WTC11 (cell line): ENCODE measurements at regions of chr17 and their contacts with region 1.

Region 1: GRCh38 chr17:45794840-45795239 is 10.7 kb downstream of the CRHR1 start:
- DNase-seq: peak; percentile 56
- ATAC-seq: peak; percentile 81
- H3K4me3 Mint-ChIP-seq: no peak overlapping the region
- H3K27ac Mint-ChIP-seq: no peak overlapping the region
- H3K4me1 Mint-ChIP-seq: peaks cover 29% of the 10 kb centered on the region
- H3K27me3 Mint-ChIP-seq: peaks cover 2% of the 10 kb centered on the region; the same call in 1 of the 2 replicates
- CTCF ChIP-seq: no peak

Region 2: GRCh38 chr17:45666046-45666600 is 128.7 kb before region 1 on chr17:
- CTCF ChIA-PET with region 1: interaction called, 14 read pairs
- POLR2A ChIA-PET with region 1: no interaction called
- DNase-seq: peak; percentile 26
- ATAC-seq: peak; percentile 50
- H3K4me3 Mint-ChIP-seq: no peak overlapping the region
- H3K27ac Mint-ChIP-seq: no peak overlapping the region
- H3K4me1 Mint-ChIP-seq: no peaks in the 10 kb centered on the region
- H3K27me3 Mint-ChIP-seq: no peaks in the 10 kb centered on the region; the same call in 1 of the 2 replicates
- CTCF ChIP-seq: no peak

Region 3: DNA sequence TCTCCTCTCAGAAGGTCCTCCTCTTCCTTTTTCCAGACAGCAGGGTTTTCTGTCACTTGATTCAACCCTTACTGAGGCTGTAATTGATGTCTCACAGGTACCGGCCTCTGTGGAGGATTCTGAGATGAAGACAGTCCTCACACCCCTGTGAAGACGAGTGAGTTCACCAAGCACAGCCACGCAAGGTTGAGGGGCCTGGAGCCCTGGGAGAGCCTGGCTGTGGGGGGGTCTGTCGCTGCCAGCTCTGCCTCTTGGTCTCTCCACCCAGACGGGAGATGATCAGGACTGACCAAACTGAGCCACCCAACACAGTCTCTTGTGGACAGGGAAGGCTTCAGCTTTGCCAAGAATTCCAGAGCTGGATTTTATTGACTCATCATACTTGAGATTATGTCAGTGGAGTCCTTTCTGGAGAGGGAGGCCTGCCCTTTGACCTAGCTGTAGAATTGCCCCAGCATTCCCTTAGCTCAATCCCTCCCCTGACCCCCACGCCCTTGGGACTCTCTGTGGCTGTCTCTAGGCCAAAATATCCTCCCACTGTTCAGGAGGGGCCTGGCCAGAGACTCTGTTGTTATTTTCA is 61.8 kb before region 1 on chr17:
- CTCF ChIA-PET with region 1: no interaction called
- POLR2A ChIA-PET with region 1: no interaction called
- DNase-seq: peak; percentile 5
- ATAC-seq: no peak
- H3K4me3 Mint-ChIP-seq: no peak overlapping the region
- H3K27ac Mint-ChIP-seq: no peak overlapping the region
- H3K4me1 Mint-ChIP-seq: no peaks in the 10 kb centered on the region
- H3K27me3 Mint-ChIP-seq: peaks cover 60% of the 10 kb centered on the region
- CTCF ChIP-seq: no peak

Region 4: GRCh38 chr17:45768000-45768399 is 26.8 kb before region 1 on chr17:
- CTCF ChIA-PET with region 1: interaction called, 14 read pairs
- POLR2A ChIA-PET with region 1: no interaction called
- DNase-seq: peak; percentile 51
- ATAC-seq: peak; percentile 80
- H3K4me3 Mint-ChIP-seq: no peak overlapping the region
- H3K27ac Mint-ChIP-seq: no peak overlapping the region
- H3K4me1 Mint-ChIP-seq: peaks cover 27% of the 10 kb centered on the region
- H3K27me3 Mint-ChIP-seq: no peaks in the 10 kb centered on the region
- CTCF ChIP-seq: no peak

Region 5: GRCh38 chr17:45812102-45812501 is 17.3 kb after region 1 on chr17:
- CTCF ChIA-PET with region 1: interaction called, 11 read pairs
- POLR2A ChIA-PET with region 1: no interaction called
- DNase-seq: no peak
- ATAC-seq: peak; percentile 30
- H3K4me3 Mint-ChIP-seq: no peak overlapping the region
- H3K27ac Mint-ChIP-seq: no peak overlapping the region
- H3K4me1 Mint-ChIP-seq: peaks cover 14% of the 10 kb centered on the region
- H3K27me3 Mint-ChIP-seq: no peaks in the 10 kb centered on the region; the same call in 1 of the 2 replicates
- CTCF ChIP-seq: no peak

Region 6: GRCh38 chr17:45914047-45914717 is 119.3 kb after region 1 on chr17:
- CTCF ChIA-PET with region 1: no interaction called
- POLR2A ChIA-PET with region 1: no interaction called
- DNase-seq: no peak
- ATAC-seq: no peak
- H3K4me3 Mint-ChIP-seq: no peak overlapping the region
- H3K27ac Mint-ChIP-seq: no peak overlapping the region
- H3K4me1 Mint-ChIP-seq: no peaks in the 10 kb centered on the region
- H3K27me3 Mint-ChIP-seq: peaks cover 7% of the 10 kb centered on the region
- CTCF ChIP-seq: no peak